ENCODE measurements at regions of chr16 and their contacts with region 1.

Region 1: DNA sequence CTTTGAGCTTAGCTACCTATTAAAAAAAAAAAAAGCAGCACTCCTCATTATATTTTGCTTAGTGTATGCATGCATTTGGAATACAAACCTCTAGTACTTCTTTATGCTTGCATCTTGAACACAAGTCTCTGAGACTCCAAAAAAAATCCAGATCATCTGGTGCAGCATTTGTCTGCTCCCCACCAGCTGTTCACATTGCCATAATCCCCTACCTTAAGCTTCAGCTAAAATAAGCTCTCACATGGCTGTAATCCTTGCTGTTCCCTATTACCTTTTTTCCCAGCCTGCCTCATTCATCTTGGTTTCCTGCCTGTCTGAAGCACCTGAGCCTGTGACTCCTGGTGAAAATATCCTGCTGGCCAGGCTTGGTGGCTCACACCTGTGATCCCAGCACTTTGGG is 7.5 kb upstream of the NFATC2IP start:
- DNase-seq: no peak
- ATAC-seq: no peak
- H3K4me3 Mint-ChIP-seq: no peak overlapping the region
- H3K27ac Mint-ChIP-seq: peak overlapping the region; percentile 8
- H3K4me1 Mint-ChIP-seq: peaks cover 11% of the 10 kb centered on the region
- H3K27me3 Mint-ChIP-seq: no peaks in the 10 kb centered on the region
- CTCF ChIP-seq: no peak

Region 2: DNA sequence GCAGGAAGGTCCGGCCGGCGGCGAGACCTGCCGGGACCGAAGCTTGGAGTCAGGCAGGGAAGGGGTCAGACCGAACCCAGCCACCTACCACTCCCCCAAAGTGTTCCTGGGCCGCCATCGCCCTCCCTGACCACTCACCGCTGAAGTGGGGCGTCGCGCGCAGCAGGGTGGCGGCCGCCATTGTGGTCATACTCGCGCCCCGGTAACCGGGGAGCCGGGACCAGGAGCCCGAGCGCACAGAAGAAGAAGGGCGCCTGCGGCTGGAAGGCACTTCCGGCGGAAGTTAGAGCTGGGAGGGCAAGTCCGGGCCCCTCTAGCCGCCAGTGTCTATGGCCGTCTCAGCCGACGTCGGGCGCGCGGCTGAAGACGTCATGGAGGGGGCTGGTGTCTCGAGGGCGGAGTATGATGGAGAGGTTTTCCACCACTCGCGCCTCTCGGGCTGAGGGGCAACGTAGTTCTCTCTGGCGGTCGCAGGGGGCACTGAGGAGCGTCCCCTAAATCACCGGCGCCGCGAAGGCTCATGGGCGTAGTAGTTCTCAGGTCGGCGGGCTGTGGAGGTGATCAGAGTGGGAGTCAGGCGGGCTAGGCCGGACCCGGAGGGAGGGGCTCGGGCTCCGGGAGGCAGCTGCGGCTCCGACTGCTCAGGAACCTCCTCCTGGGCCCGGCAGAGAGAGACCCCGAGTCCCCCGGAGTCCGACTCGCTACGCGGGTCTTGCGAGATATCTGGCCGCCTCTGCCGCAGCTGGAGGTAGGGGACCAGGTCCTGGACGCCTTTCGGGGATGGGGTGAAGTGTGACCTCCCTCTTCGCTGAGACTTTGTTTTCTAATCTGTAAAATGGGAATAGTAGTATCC is 97.0 kb before region 1 on chr16 and contains the start of gene TUFM:
- CTCF ChIA-PET with region 1: interaction called, 20 read pairs
- POLR2A ChIA-PET with region 1: interaction called, 6 read pairs
- intact Hi-C with region 1: loop called (anchors 1 kb)
- DNase-seq: peak; percentile 96
- ATAC-seq: peak; percentile 97
- H3K4me3 Mint-ChIP-seq: peak within 1 kb of the TSS; percentile 95
- H3K27ac Mint-ChIP-seq: peak within 1 kb of the TSS; percentile 90
- H3K4me1 Mint-ChIP-seq: peaks cover 28% of the 10 kb centered on the region
- H3K27me3 Mint-ChIP-seq: no peaks in the 10 kb centered on the region
- CTCF ChIP-seq: no peak
- total RNA-seq, gene TUFM: 189 and 206 TPM in 2 replicates

Region 3: DNA sequence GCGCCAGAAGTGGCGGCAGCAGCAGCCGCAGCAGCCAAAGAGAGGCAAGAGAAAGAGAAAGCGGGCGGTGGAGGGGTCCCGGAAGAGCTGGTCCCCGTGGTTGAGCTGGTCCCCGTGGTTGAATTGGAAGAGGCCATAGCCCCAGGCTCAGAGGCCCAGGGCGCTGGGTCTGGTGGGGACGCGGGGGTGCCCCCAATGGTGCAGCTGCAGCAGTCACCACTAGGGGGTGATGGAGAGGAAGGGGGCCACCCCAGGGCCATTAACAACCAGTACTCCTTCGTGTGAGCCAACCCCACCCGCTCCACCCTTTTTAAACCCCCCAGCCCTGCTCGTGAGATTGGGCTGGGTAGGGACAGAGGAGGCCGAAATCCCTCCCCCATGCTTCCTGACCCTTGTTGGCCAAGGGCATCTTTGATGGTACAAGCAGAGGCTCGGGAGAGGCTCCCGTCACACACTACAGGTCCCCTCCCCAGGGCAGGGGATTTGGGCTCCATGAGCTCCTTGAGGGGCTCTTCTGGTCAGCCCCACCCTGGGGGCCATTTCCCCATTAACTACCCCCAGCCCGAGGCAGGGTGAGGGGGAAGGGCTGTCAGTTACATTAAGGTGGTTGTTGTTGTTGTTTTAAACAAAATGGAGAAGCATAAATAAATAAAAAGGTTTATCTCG is 69.6 kb before region 1 on chr16:
- CTCF ChIA-PET with region 1: interaction called, 60 read pairs
- POLR2A ChIA-PET with region 1: interaction called, 6 read pairs
- intact Hi-C with region 1: loop called (anchors 1 kb)
- DNase-seq: peak; percentile 53
- ATAC-seq: peak; percentile 92
- H3K4me3 Mint-ChIP-seq: no peak overlapping the region
- H3K27ac Mint-ChIP-seq: no peak overlapping the region
- H3K4me1 Mint-ChIP-seq: peaks cover 2% of the 10 kb centered on the region
- H3K27me3 Mint-ChIP-seq: no peaks in the 10 kb centered on the region
- CTCF ChIP-seq: no peak

Region 4: GRCh38 chr16:28879841-28880588 is 63.3 kb before region 1 on chr16:
- CTCF ChIA-PET with region 1: interaction called, 60 read pairs
- POLR2A ChIA-PET with region 1: interaction called, 6 read pairs
- intact Hi-C with region 1: loop called (anchors 1 kb)
- DNase-seq: peak; percentile 71
- ATAC-seq: peak; percentile 98
- H3K4me3 Mint-ChIP-seq: peak overlapping the region; percentile 89
- H3K27ac Mint-ChIP-seq: peak overlapping the region; percentile 59
- H3K4me1 Mint-ChIP-seq: peaks cover 14% of the 10 kb centered on the region
- H3K27me3 Mint-ChIP-seq: peaks cover 5% of the 10 kb centered on the region
- CTCF ChIP-seq: no peak

Region 5: GRCh38 chr16:28910086-28911031 is 32.9 kb before region 1 on chr16:
- CTCF ChIA-PET with region 1: interaction called, 16 read pairs
- POLR2A ChIA-PET with region 1: interaction called, 3 read pairs
- intact Hi-C with region 1: loop called (anchors 5 kb)
- DNase-seq: no peak
- ATAC-seq: peak; percentile 73
- H3K4me3 Mint-ChIP-seq: peak overlapping the region; percentile 7
- H3K27ac Mint-ChIP-seq: peak overlapping the region; percentile 87
- H3K4me1 Mint-ChIP-seq: peaks cover 12% of the 10 kb centered on the region
- H3K27me3 Mint-ChIP-seq: no peaks in the 10 kb centered on the region
- CTCF ChIP-seq: no peak

Region 6: GRCh38 chr16:28930652-28931051 is 12.6 kb before region 1 on chr16:
- CTCF ChIA-PET with region 1: interaction called, 51 read pairs
- POLR2A ChIA-PET with region 1: interaction called, 192 read pairs
- intact Hi-C with region 1: loop called (anchors 1 kb)
- DNase-seq: peak; percentile 60
- ATAC-seq: peak; percentile 76
- H3K4me3 Mint-ChIP-seq: peak overlapping the region; percentile 99
- H3K27ac Mint-ChIP-seq: peak overlapping the region; percentile 98
- H3K4me1 Mint-ChIP-seq: peaks cover 75% of the 10 kb centered on the region
- H3K27me3 Mint-ChIP-seq: no peaks in the 10 kb centered on the region
- CTCF ChIP-seq: no peak

Region 7: GRCh38 chr16:28967156-28967555 is 23.9 kb after region 1 on chr16:
- CTCF ChIA-PET with region 1: no interaction called
- POLR2A ChIA-PET with region 1: no interaction called
- intact Hi-C with region 1: no loop called
- DNase-seq: no peak
- ATAC-seq: no peak
- H3K4me3 Mint-ChIP-seq: no peak overlapping the region
- H3K27ac Mint-ChIP-seq: no peak overlapping the region
- H3K4me1 Mint-ChIP-seq: no peaks in the 10 kb centered on the region
- H3K27me3 Mint-ChIP-seq: no peaks in the 10 kb centered on the region
- CTCF ChIP-seq: no peak

Measured in activated B cell treated with CpG ODN at 0.5 μM for 24 hours (primary cell).